CD8-positive, alpha-beta T cell (primary cell): ENCODE measurements at regions of chr4 and their contacts with region 1.

Region 1: GRCh38 chr4:37816006-37816405 is 10.5 kb upstream of the PGM2 start:
- DNase-seq: peak in 4 of 9 experiments; percentile 11 to 66 (median 54)
- ATAC-seq: peak; percentile 68
- H3K4me3 ChIP-seq: peak overlapping the region in 1 of 2 experiments; percentile 22
- H3K4me3 Mint-ChIP-seq: peak overlapping the region; percentile 55
- H3K27ac ChIP-seq: peak overlapping the region in 1 of 2 experiments; percentile 41
- H3K27ac Mint-ChIP-seq: peak overlapping the region; percentile 74
- H3K4me1 ChIP-seq: peaks cover 22% of the 10 kb centered on the region
- H3K4me1 Mint-ChIP-seq: peaks cover 21% of the 10 kb centered on the region
- H3K27me3 ChIP-seq: no peaks in the 10 kb centered on the region
- H3K27me3 Mint-ChIP-seq: no peaks in the 10 kb centered on the region
- CTCF ChIP-seq: no peak

Region 2: DNA sequence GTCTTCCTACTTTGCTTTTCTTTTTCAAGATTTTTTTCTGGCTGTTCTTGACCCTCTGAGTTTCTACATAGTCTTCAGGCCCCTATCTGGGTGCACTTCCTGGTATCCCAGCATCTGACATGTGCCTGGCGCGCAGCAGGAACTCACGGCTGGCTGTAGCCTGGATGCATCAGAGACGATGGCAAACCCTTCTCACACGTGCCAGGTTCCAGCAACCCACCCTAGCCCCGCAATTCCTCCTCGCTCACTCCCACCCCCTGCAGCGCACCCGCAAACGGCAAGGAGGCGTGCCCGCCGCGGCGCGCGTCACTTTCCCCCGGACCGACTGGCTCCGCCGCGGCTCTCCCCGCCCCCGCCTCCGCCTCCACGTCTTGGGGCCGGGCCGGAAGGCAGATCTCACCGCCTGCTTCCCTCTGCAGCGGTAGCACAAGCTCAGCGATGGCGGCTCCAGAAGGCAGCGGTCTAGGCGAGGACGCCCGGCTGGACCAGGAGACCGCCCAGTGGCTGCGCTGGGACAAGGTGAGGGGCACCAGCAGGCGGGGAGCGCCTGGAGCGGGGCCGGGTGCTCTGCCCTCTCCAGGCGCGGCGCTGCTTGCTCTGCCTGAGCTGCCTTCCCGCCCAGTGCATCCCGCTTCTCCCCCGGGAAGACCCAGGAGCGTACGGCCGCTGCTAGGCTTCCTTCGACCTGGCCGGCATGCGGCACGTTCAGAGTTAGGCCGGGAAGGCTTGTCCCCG is 10.5 kb after region 1 on chr4 and contains the start of gene PGM2:
- CTCF ChIA-PET with region 1: no interaction called
- POLR2A ChIA-PET with region 1: interaction called, 3 read pairs
- intact Hi-C with region 1: loop called in 1 of 2 experiments (anchors 1 kb)
- DNase-seq: peak; percentile 81 to 93 (median 89)
- ATAC-seq: peak; percentile 98
- H3K4me3 ChIP-seq: peak within 1 kb of the TSS; percentile 96 to 99
- H3K4me3 Mint-ChIP-seq: peak within 1 kb of the TSS; percentile 97
- H3K27ac ChIP-seq: peak within 1 kb of the TSS; percentile 76 to 79
- H3K27ac Mint-ChIP-seq: peak within 1 kb of the TSS; percentile 92
- H3K4me1 ChIP-seq: peaks cover 23% of the 10 kb centered on the region
- H3K4me1 Mint-ChIP-seq: peaks cover 53% of the 10 kb centered on the region
- H3K27me3 ChIP-seq: no peaks in the 10 kb centered on the region
- H3K27me3 Mint-ChIP-seq: no peaks in the 10 kb centered on the region
- CTCF ChIP-seq: no peak
- total RNA-seq, gene PGM2: 14.5 to 15.4 TPM